Activated CD8-positive, alpha-beta memory T cell treated with anti-CD3 and anti-CD28 coated beads, Interleukin-2, amount 10 ng/mL, durations not matched to agents 7 days and 5 days (primary cell): ENCODE measurements at regions of chr6 and their contacts with region 1.

Region 1: DNA sequence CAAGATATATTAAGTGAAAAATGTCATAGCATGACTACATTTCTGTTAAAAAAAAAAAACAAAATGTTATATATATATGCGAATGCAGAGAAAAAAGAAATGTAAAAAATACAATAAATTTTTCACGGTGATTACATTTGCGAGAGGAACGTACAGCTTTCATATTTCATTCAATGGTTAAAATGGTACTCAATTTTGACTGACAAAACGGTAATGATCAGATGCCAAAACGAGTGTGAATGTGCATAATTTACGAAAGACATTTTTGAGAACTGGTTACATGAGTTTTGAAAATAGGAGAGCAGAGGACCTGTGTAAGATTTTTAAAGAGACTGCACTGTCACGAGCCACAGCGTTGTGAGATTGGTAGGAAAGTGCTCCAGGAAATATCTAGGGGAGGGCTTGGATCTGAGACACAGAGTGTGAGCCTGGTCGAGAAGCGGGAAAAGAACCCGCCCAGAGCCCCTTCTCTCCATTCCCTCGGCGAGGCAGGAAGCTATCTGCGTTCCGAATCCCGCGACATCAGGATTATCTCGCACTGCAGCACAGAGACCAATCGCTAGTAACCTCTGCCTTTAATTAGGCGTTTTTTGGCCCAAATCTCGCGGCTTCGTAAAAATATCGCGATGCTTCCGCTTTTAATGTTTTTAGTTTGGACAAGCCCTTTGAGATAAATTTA is 28.5 kb downstream of the TRIM27 start:
- DNase-seq: peak; percentile 97
- ATAC-seq: peak; percentile 85
- H3K4me3 Mint-ChIP-seq: peak overlapping the region; percentile 99
- H3K27ac Mint-ChIP-seq: peak overlapping the region; percentile 100
- H3K4me1 Mint-ChIP-seq: peaks cover 12% of the 10 kb centered on the region
- H3K27me3 Mint-ChIP-seq: no peaks in the 10 kb centered on the region

Region 2: GRCh38 chr6:28884423-28885131 is 10.7 kb before region 1 on chr6:
- CTCF ChIA-PET with region 1: interaction called, 22 read pairs
- DNase-seq: peak; percentile 88
- ATAC-seq: peak; percentile 83
- H3K4me3 Mint-ChIP-seq: peak overlapping the region; percentile 68
- H3K27ac Mint-ChIP-seq: peak overlapping the region; percentile 87
- H3K4me1 Mint-ChIP-seq: peaks cover 43% of the 10 kb centered on the region
- H3K27me3 Mint-ChIP-seq: peaks cover 15% of the 10 kb centered on the region

Region 3: DNA sequence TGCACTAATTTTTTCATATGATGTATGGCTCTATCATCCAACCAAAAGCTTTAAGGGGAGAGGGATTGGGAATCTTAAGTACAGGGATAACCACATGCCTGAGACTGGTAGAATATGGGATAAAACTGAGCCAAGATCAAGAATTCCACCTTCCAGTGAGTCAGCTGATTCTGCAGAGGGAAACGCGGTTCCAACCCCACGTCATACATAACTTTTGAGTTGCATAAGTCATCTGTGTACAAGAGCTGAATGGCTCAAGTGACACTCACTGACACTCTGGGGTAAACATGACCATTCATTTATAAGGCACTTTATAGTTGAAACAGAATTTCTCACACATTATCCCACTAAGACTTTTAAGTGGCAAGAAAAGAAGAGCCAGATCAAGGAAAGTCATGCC is 12.1 kb after region 1 on chr6:
- CTCF ChIA-PET with region 1: no interaction called
- DNase-seq: no peak
- ATAC-seq: no peak
- H3K4me3 Mint-ChIP-seq: no peak overlapping the region
- H3K27ac Mint-ChIP-seq: no peak overlapping the region
- H3K4me1 Mint-ChIP-seq: peaks cover 3% of the 10 kb centered on the region
- H3K27me3 Mint-ChIP-seq: no peaks in the 10 kb centered on the region